ENCODE measurements at regions of chr6 and their contacts with region 1.

Region 1: GRCh38 chr6:47844881-47845280 is 63.0 kb downstream of the OPN5 start:
- DNase-seq: no peak
- H3K4me3 ChIP-seq: no peak overlapping the region
- H3K27ac ChIP-seq: no peak overlapping the region
- H3K4me1 ChIP-seq: no peaks in the 10 kb centered on the region
- H3K27me3 ChIP-seq: peaks cover 3% of the 10 kb centered on the region
- CTCF ChIP-seq: no peak

Region 2: DNA sequence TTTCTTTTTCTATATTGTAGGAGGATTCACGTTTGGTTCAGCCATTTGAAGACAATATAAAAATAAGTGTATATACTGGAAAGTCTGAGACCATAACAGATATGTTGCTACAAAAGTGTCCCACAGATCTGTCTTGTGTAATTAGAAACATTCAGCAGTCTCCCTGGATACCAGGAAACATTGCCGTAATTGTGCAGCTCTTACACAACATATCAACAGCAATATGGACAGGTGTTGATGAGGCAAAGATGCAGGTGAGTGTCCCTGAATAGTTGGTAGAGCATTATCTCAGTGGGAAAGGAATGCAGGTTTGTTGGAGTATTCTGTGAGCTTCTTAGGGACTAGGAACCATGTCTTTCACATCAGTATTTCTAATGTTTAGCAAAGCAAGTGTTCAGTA is 164.8 kb before region 1 on chr6:
- CTCF ChIA-PET with region 1: no interaction called
- dilution Hi-C with region 1: no loop called
- in situ Hi-C with region 1: no loop called
- intact Hi-C with region 1: no loop called
- DNase-seq: peak; percentile 51
- H3K4me3 ChIP-seq: no peak overlapping the region
- H3K27ac ChIP-seq: no peak overlapping the region
- H3K4me1 ChIP-seq: no peaks in the 10 kb centered on the region
- H3K27me3 ChIP-seq: no peaks in the 10 kb centered on the region
- CTCF ChIP-seq: no peak

Region 3: GRCh38 chr6:47890326-47890875 is 45.5 kb after region 1 on chr6:
- CTCF ChIA-PET with region 1: no interaction called
- dilution Hi-C with region 1: loop called (anchors 5 kb)
- in situ Hi-C with region 1: no loop called
- intact Hi-C with region 1: no loop called
- DNase-seq: no peak
- H3K4me3 ChIP-seq: no peak overlapping the region
- H3K27ac ChIP-seq: no peak overlapping the region
- H3K4me1 ChIP-seq: no peaks in the 10 kb centered on the region
- H3K27me3 ChIP-seq: no peaks in the 10 kb centered on the region
- CTCF ChIP-seq: no peak

Measured in mammary epithelial cell (primary cell).